H1 (cell line): ENCODE measurements at regions of chr2 and their contacts with region 1.

Region 1: DNA sequence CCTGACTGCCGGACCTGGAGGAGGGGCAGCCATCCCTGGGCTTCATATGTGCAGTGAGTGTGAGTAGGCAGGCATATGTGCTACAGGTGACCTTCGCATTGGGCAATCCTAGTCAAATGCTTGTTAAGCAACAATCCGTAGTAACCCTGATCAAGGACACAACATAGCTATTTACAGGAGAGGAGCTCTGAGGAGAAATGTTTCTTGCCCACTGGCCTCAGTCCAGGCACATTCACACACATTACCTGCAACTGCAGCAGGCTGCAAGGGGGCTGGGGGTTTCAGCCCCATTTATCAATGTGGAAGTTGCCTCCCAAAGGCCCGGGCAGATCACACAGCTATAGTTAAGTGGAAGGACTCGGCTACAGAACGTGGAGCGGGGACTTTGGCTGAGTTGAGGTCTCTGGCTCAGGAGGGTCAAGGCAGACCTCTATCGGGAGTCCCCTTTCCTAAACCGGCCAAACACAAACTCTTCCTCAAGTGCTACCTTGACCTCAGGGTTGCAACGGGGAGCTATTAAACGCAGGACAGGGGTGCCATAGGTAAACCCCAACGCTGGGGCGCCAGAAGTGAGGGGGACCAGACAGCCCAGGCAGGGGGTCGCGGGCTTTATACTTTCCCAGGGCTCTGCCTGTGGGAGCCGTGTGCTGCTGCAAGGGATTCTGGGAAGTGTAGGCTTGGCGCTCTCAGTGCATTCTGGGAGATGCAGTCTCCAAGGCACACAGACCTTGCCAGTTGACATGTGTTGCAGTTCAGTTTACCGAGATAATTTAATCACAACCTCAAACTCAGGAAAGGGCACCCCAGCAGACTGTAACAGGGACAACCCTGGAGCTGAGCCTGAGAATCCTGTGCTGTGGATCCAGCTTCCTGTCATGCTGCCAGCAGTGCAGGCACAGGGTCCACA is 9.4 kb downstream of the KHK start:
- DNase-seq: peak in 1 of 2 experiments; percentile 81
- H3K4me3 ChIP-seq: peak overlapping the region; percentile 14 to 53 (median 40); a peak in 5 of 8 replicates
- H3K27ac ChIP-seq: no peak overlapping the region
- H3K4me1 ChIP-seq: peaks cover 0 to 2% (median under 1%) of the 10 kb centered on the region in 4 experiments; a peak in 2 of 7 replicates
- H3K27me3 ChIP-seq: no peaks in the 10 kb centered on the region
- CTCF ChIP-seq: no peak
- EP300 ChIP-seq: no peak
- POLR2A ChIP-seq: no peak
- RAD21 ChIP-seq: no peak

Region 2: DNA sequence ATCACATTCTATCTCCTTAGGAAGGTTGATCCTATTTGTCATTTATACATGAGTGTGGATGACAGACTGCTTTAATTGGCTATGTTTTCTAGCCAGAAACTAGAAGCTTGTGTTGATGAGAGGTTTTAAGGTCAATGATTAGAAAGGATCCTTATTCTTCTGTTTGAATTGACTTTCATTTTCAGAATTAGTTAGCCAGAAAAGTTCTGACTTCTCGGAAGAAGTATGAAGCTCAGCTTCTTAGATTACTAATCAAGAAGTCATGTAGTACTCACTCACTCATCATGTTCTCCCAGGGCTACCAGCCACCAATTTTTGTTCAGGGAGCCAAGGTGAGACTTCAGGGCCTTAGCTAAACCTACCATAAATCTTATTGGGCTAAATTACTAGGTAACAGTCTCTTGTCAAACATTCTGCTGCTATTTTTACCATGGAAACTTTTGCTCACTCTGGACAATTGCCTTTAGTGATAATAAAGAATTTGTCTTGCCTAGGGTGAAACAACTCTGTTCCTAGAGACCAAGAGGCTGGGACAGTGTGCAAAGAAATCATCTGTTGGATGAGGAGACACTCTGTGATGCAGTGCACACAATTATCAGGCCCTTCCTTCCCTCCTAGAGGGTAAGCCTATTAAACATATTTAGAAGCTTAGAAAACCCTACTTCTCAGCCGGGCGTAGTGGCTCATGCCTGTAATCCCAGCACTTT is 1642.6 kb before region 1 on chr2:
- CTCF ChIA-PET with region 1: no interaction called
- POLR2A ChIA-PET with region 1: no interaction called
- DNase-seq: no peak
- H3K4me3 ChIP-seq: no peak overlapping the region
- H3K27ac ChIP-seq: no peak overlapping the region
- H3K4me1 ChIP-seq: no peaks in the 10 kb centered on the region
- H3K27me3 ChIP-seq: no peaks in the 10 kb centered on the region
- CTCF ChIP-seq: no peak
- EP300 ChIP-seq: no peak
- POLR2A ChIP-seq: no peak
- RAD21 ChIP-seq: no peak

Region 3: GRCh38 chr2:27079233-27080139 is 16.5 kb before region 1 on chr2:
- CTCF ChIA-PET with region 1: interaction called, 12 read pairs
- POLR2A ChIA-PET with region 1: no interaction called
- DNase-seq: no peak
- H3K4me3 ChIP-seq: no peak overlapping the region
- H3K27ac ChIP-seq: no peak overlapping the region
- H3K4me1 ChIP-seq: peaks cover 0 to 19% (median 13%) of the 10 kb centered on the region in 4 experiments; a peak in 6 of 7 replicates
- H3K27me3 ChIP-seq: peaks cover 0 to 3% (median 0%) of the 10 kb centered on the region in 4 experiments; a peak in 1 of 7 replicates
- CTCF ChIP-seq: no peak
- EP300 ChIP-seq: no peak
- POLR2A ChIP-seq: no peak
- RAD21 ChIP-seq: no peak

Region 4: DNA sequence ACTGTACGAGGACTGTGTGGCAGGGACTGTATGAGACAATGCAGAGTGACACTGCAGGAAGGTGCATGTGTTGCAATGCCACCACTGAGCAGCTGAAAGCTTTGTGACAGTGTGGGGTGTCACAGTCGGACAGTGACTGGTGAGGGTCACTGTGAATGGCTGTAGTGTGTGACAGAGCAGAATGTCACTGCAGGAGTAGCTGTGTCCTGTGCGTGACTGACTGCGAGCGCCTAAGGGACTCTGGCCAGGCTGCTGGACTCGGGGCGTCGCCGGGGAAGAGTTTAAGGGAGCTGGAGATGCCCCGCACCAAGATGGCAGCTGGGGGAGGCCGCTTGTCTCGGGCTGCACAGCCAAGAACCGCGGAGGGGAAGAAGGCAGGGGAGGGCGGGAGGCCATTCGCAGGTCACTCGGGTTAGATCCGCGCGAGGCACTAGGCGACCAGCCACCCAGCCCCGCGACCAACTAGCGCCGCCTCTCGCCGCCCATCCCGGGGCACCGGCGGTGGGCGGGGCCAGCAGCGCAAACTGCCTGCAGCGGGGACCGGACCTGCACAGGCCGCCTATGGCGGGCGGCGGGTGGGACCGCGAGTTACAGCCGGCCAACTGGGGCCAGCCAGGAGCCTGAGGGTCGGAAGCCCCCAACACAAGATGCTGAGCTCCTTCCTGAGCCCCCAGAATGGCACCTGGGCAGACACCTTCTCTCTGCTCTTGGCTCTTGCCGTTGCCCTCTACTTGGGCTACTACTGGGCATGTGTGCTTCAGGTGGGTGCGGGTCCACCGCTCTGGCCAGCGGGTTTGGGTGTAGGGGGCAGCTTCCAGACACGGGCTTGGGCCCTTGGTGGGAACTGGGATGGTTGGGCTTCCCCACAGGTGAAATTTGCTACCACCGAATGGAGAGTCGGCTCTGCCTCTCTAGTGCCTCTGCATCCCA is 27.6 kb after region 1 on chr2 and contains the start of gene ABHD1:
- CTCF ChIA-PET with region 1: interaction called, 10 read pairs
- POLR2A ChIA-PET with region 1: interaction called, 3 read pairs
- DNase-seq: peak in 1 of 2 experiments; percentile 85
- H3K4me3 ChIP-seq: peak within 1 kb of the TSS; percentile 33 to 68 (median 65)
- H3K27ac ChIP-seq: no peak within 1 kb of the TSS
- H3K4me1 ChIP-seq: peaks cover 0 to 15% (median 9%) of the 10 kb centered on the region in 4 experiments; a peak in 6 of 7 replicates
- H3K27me3 ChIP-seq: peaks cover 8 to 50% (median 38%) of the 10 kb centered on the region in 4 experiments
- CTCF ChIP-seq: no peak
- EP300 ChIP-seq: no peak
- POLR2A ChIP-seq: peak in 1 of 2 experiments; percentile 72; a peak in 2 of 3 replicates
- RAD21 ChIP-seq: no peak
- total RNA-seq, gene ABHD1: 0.20 and 0.50 TPM in 2 replicates

Region 5: GRCh38 chr2:27174316-27175040 is 78.5 kb after region 1 on chr2:
- CTCF ChIA-PET with region 1: interaction called, 19 read pairs
- POLR2A ChIA-PET with region 1: interaction called, 3 read pairs
- DNase-seq: no peak
- H3K4me3 ChIP-seq: no peak overlapping the region
- H3K27ac ChIP-seq: no peak overlapping the region
- H3K4me1 ChIP-seq: no peaks in the 10 kb centered on the region
- H3K27me3 ChIP-seq: no peaks in the 10 kb centered on the region; a peak in 4 of 7 replicates
- CTCF ChIP-seq: no peak
- EP300 ChIP-seq: no peak
- POLR2A ChIP-seq: no peak
- RAD21 ChIP-seq: no peak

Region 6: GRCh38 chr2:27264753-27265535 is 168.9 kb after region 1 on chr2:
- CTCF ChIA-PET with region 1: interaction called, 11 read pairs
- POLR2A ChIA-PET with region 1: no interaction called
- DNase-seq: peak in 1 of 2 experiments; percentile 89
- H3K4me3 ChIP-seq: peak overlapping the region; percentile 57 to 85 (median 62)
- H3K27ac ChIP-seq: no peak overlapping the region
- H3K4me1 ChIP-seq: peaks cover 3 to 19% (median 14%) of the 10 kb centered on the region in 4 experiments
- H3K27me3 ChIP-seq: peaks cover 39 to 69% (median 60%) of the 10 kb centered on the region in 4 experiments
- CTCF ChIP-seq: peak in 2 of 3 experiments; percentile 76 to 88; a peak in 3 of 4 replicates
- EP300 ChIP-seq: no peak
- POLR2A ChIP-seq: peak in 1 of 2 experiments; percentile 63; a peak in 2 of 3 replicates
- RAD21 ChIP-seq: peak; percentile 42 to 63

Region 7: GRCh38 chr2:27390822-27391679 is 295.1 kb after region 1 on chr2:
- CTCF ChIA-PET with region 1: no interaction called
- POLR2A ChIA-PET with region 1: no interaction called
- DNase-seq: no peak
- H3K4me3 ChIP-seq: no peak overlapping the region
- H3K27ac ChIP-seq: no peak overlapping the region
- H3K4me1 ChIP-seq: no peaks in the 10 kb centered on the region
- H3K27me3 ChIP-seq: no peaks in the 10 kb centered on the region
- CTCF ChIP-seq: no peak
- EP300 ChIP-seq: no peak
- POLR2A ChIP-seq: no peak
- RAD21 ChIP-seq: no peak